ENCODE measurements at regions of chr5 and their contacts with region 1.

Region 1: GRCh38 chr5:90932052-90932699 is 373.6 kb downstream of the ADGRV1 start:
- DNase-seq: peak; percentile 72
- H3K4me3 Mint-ChIP-seq: no peak overlapping the region
- H3K27ac Mint-ChIP-seq: no peak overlapping the region
- H3K4me1 Mint-ChIP-seq: peaks cover 22% of the 10 kb centered on the region
- H3K27me3 Mint-ChIP-seq: no peaks in the 10 kb centered on the region
- CTCF ChIP-seq: peak; percentile 76

Region 2: DNA sequence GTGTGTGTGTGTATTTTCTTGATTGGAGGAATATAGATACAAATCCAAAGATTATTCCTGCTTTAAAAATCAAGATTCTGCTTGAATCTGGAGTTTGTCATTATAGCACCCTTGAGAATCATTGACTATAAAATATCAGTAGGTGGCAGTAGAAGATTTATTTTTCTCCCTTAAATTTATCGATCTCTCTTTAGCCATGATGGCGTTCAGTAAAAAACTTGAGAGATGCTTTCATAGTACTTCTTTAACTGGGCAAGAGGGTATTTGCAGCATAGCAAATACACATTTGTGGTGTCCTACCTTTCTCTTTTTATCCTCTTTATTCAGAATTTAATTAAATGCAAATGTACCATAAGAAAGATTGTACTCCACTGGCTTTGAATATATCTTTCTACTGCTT is 65.8 kb before region 1 on chr5:
- CTCF ChIA-PET with region 1: interaction called, 4 read pairs
- intact Hi-C with region 1: loop called (anchors 1 kb)
- DNase-seq: no peak
- H3K4me3 Mint-ChIP-seq: no peak overlapping the region
- H3K27ac Mint-ChIP-seq: no peak overlapping the region
- H3K4me1 Mint-ChIP-seq: peaks cover 10% of the 10 kb centered on the region
- H3K27me3 Mint-ChIP-seq: no peaks in the 10 kb centered on the region
- CTCF ChIP-seq: peak; percentile 64

Region 3: DNA sequence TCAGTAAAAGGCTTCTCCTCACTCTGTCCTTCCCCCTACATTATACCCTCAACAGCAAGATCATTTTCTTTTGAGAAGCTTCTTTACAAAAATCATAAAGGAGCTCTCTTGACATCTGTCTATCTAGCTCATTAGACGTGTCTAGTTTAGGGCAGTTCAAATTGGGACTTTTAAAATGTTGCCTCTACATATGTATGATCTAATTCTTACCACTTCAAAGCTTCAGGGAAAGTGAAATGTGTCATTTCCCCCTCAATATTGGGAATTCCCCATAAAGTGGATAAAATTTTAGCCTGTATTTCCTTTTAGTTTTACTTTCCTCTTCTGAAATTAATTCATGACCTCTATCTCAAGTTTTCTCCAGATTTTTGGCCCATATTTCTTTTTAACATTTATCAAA is 127.2 kb after region 1 on chr5:
- CTCF ChIA-PET with region 1: interaction called, 5 read pairs
- intact Hi-C with region 1: loop called (anchors 5 kb)
- DNase-seq: no peak
- H3K4me3 Mint-ChIP-seq: peak overlapping the region; percentile 38
- H3K27ac Mint-ChIP-seq: peak overlapping the region; percentile 93
- H3K4me1 Mint-ChIP-seq: peaks cover 41% of the 10 kb centered on the region
- H3K27me3 Mint-ChIP-seq: no peaks in the 10 kb centered on the region
- CTCF ChIP-seq: no peak

Region 4: DNA sequence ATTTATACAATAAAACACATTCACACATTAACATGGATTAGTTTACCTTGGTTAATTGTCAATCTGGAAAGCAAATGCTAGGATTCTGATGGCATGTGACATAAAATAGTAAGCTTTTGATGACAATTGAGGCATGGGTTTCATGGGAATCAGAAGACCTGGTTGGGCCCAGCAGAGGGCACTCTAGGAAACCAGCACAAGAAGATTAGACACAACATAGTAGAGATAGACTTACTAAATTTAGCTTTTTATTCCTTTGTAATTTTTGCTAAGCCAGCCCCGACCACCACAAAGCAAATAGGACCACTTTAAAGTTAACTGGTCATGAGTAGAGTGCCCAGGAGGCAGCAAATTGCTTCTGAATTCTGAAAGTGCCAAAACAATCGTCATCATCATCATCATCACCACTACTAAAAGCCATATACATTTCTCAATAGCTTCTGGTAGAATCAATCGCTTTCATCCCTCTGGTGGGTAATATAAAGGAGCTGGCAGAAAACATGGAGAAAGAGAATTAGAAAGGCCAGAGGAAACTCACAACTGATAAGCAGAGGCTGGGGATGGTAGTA is 287.7 kb after region 1 on chr5:
- CTCF ChIA-PET with region 1: interaction called, 6 read pairs
- intact Hi-C with region 1: loop called (anchors 1 kb)
- DNase-seq: peak; percentile 56
- H3K4me3 Mint-ChIP-seq: no peak overlapping the region
- H3K27ac Mint-ChIP-seq: peak overlapping the region; percentile 51
- H3K4me1 Mint-ChIP-seq: peaks cover 45% of the 10 kb centered on the region
- H3K27me3 Mint-ChIP-seq: no peaks in the 10 kb centered on the region
- CTCF ChIP-seq: peak; percentile 32

Measured in Calu3 (cell line).